Activated CD4-positive, alpha-beta T cell treated with anti-CD3 and anti-CD28 coated beads for 36 hours (primary cell): ENCODE measurements at regions of chr7 and their contacts with region 1.

Region 1: GRCh38 chr7:66493235-66494181 is 135.2 kb upstream of the KCTD7 start:
- DNase-seq: peak; percentile 98
- ATAC-seq: peak; percentile 94
- H3K4me3 Mint-ChIP-seq: peak overlapping the region; percentile 94
- H3K27ac Mint-ChIP-seq: peak overlapping the region; percentile 97
- H3K4me1 Mint-ChIP-seq: peaks cover 4% of the 10 kb centered on the region
- H3K27me3 Mint-ChIP-seq: no peaks in the 10 kb centered on the region

Region 2: GRCh38 chr7:65981965-65982792 is 511.3 kb before region 1 on chr7 and contains the start of gene GUSB:
- CTCF ChIA-PET with region 1: no interaction called
- POLR2A ChIA-PET with region 1: no interaction called
- intact Hi-C with region 1: loop called in 1 of 2 experiments (anchors 1 kb)
- DNase-seq: peak; percentile 95
- ATAC-seq: peak; percentile 90
- H3K4me3 Mint-ChIP-seq: peak within 1 kb of the TSS; percentile 80
- H3K27ac Mint-ChIP-seq: peak within 1 kb of the TSS; percentile 90
- H3K4me1 Mint-ChIP-seq: peaks cover 8% of the 10 kb centered on the region
- H3K27me3 Mint-ChIP-seq: no peaks in the 10 kb centered on the region
- total RNA-seq, gene GUSB: 41.8 to 43.2 TPM

Region 3: DNA sequence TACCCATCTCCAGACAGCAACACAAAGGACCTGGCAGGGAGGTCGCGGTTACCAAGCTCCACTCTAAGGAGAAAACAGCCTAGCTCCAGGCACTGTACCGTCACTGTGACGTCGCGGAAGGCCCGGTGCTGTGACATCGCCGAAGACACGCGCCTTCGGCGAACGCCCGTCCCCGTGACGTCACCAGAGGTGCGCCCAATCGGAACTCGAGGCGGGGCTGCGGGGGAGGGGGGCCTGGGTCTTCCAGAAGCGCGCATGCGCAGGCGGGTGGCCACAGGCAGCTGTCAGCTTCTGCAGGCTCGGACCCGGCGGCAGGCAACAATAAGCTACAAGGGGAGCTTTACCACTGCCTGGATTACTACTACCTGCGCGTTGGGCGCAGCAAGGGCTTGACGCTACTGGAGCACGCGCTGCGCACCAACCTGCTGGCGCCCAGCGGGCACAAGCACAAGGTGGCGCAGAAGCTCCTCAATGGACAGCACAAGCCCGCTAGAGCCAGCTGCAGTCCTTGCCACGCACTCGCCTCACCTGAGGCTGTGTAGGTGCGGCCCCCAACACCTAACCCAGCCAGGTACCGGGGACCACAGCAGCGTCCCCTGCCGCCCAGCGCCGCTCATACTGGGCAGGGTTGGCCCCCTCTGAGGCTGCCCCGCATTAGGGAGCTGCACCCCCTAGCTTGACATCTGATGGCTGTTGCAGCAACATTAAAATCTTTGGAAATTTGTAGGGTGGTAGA is 80.0 kb before region 1 on chr7:
- CTCF ChIA-PET with region 1: interaction called, 4 read pairs
- POLR2A ChIA-PET with region 1: interaction called, 4 read pairs
- intact Hi-C with region 1: loop called (anchors 2 kb)
- DNase-seq: peak; percentile 93
- ATAC-seq: peak; percentile 89
- H3K4me3 Mint-ChIP-seq: peak overlapping the region; percentile 64
- H3K27ac Mint-ChIP-seq: no peak overlapping the region
- H3K4me1 Mint-ChIP-seq: peaks cover 7% of the 10 kb centered on the region
- H3K27me3 Mint-ChIP-seq: no peaks in the 10 kb centered on the region

Region 4: GRCh38 chr7:66628361-66629140 is 135.0 kb after region 1 on chr7 and contains the start of gene KCTD7:
- CTCF ChIA-PET with region 1: no interaction called
- POLR2A ChIA-PET with region 1: no interaction called
- intact Hi-C with region 1: loop called in 1 of 2 experiments (anchors 1 kb)
- DNase-seq: peak; percentile 98
- ATAC-seq: peak; percentile 94
- H3K4me3 Mint-ChIP-seq: peak within 1 kb of the TSS; percentile 82
- H3K27ac Mint-ChIP-seq: peak within 1 kb of the TSS; percentile 86
- H3K4me1 Mint-ChIP-seq: peaks cover 45% of the 10 kb centered on the region
- H3K27me3 Mint-ChIP-seq: peaks cover 2% of the 10 kb centered on the region
- total RNA-seq, gene KCTD7: 7.8 TPM

Region 5: DNA sequence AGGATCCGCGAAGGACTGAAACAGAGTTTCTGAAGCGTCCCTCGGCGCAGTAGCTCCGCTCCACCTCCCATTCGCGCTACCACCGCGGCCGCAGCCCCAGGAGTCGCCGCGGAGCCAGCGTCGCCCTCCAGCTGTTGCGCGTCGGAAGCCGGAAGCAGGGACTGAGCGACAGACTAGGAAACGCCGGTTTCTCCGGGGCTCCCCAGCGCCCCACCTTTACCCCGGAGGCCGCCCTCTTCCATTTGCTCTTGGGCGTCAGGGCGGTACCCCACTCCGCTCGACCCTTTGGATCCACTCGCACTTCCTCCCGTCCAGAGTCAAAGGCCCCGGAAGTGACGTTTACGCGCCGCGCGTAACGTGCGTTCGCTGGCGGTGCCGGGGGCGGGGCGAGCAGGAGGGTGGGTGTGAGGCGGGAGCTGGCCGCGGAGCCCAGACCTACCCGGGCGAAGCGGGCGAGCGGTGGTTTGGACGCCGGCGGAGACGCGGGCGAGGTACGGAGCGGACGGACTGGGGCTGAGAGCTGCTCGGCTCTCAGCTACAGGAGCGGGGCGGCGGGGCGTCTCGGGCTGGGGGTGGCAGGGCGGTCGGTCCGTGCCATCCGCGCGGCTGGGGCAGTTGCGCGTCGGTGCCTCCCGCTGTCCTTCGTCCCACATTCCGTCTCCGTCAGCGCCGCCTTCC is 246.9 kb after region 1 on chr7 and contains the start of gene RABGEF1:
- CTCF ChIA-PET with region 1: no interaction called
- POLR2A ChIA-PET with region 1: no interaction called
- intact Hi-C with region 1: loop called in 1 of 2 experiments (anchors 1 kb)
- DNase-seq: peak; percentile 98
- ATAC-seq: peak; percentile 89
- H3K4me3 Mint-ChIP-seq: peak within 1 kb of the TSS; percentile 98
- H3K27ac Mint-ChIP-seq: peak within 1 kb of the TSS; percentile 91
- H3K4me1 Mint-ChIP-seq: peaks cover 34% of the 10 kb centered on the region
- H3K27me3 Mint-ChIP-seq: no peaks in the 10 kb centered on the region
- total RNA-seq, gene RABGEF1: 19.3 to 22.5 TPM

Region 6: GRCh38 chr7:67302113-67303039 is 808.9 kb after region 1 on chr7:
- CTCF ChIA-PET with region 1: no interaction called
- POLR2A ChIA-PET with region 1: no interaction called
- intact Hi-C with region 1: loop called in 1 of 2 experiments (anchors 1 kb)
- DNase-seq: peak; percentile 99
- ATAC-seq: peak; percentile 88
- H3K4me3 Mint-ChIP-seq: peak overlapping the region; percentile 88
- H3K27ac Mint-ChIP-seq: peak overlapping the region; percentile 92
- H3K4me1 Mint-ChIP-seq: peaks cover 18% of the 10 kb centered on the region
- H3K27me3 Mint-ChIP-seq: no peaks in the 10 kb centered on the region

Region 7: GRCh38 chr7:67882843-67883242 is 1389.3 kb after region 1 on chr7:
- CTCF ChIA-PET with region 1: no interaction called
- POLR2A ChIA-PET with region 1: no interaction called
- intact Hi-C with region 1: no loop called
- DNase-seq: no peak
- ATAC-seq: no peak
- H3K4me3 Mint-ChIP-seq: no peak overlapping the region
- H3K27ac Mint-ChIP-seq: no peak overlapping the region
- H3K4me1 Mint-ChIP-seq: no peaks in the 10 kb centered on the region
- H3K27me3 Mint-ChIP-seq: no peaks in the 10 kb centered on the region